ENCODE measurements at regions of chr11 and their contacts with region 1.

Region 1: GRCh38 chr11:88421530-88421929 is 84.0 kb upstream of the CTSC start:
- DNase-seq: peak; percentile 63
- H3K4me3 Mint-ChIP-seq: no peak overlapping the region
- H3K27ac Mint-ChIP-seq: no peak overlapping the region
- H3K4me1 Mint-ChIP-seq: peaks cover 39% of the 10 kb centered on the region
- H3K27me3 Mint-ChIP-seq: no peaks in the 10 kb centered on the region

Region 2: GRCh38 chr11:88174709-88175568 is 246.6 kb before region 1 on chr11 and contains the start of gene RAB38:
- CTCF ChIA-PET with region 1: no interaction called
- intact Hi-C with region 1: loop called (anchors 1 kb)
- DNase-seq: peak; percentile 75
- H3K4me3 Mint-ChIP-seq: peak within 1 kb of the TSS; percentile 72
- H3K27ac Mint-ChIP-seq: no peak within 1 kb of the TSS
- H3K4me1 Mint-ChIP-seq: peaks cover 31% of the 10 kb centered on the region
- H3K27me3 Mint-ChIP-seq: peaks cover 21% of the 10 kb centered on the region
- total RNA-seq, gene RAB38: 0.69 to 0.72 TPM

Region 3: GRCh38 chr11:88231894-88232482 is 189.5 kb before region 1 on chr11:
- CTCF ChIA-PET with region 1: no interaction called
- intact Hi-C with region 1: loop called (anchors 5 kb)
- DNase-seq: peak; percentile 34
- H3K4me3 Mint-ChIP-seq: no peak overlapping the region
- H3K27ac Mint-ChIP-seq: no peak overlapping the region
- H3K4me1 Mint-ChIP-seq: no peaks in the 10 kb centered on the region
- H3K27me3 Mint-ChIP-seq: peaks cover 4% of the 10 kb centered on the region

Region 4: DNA sequence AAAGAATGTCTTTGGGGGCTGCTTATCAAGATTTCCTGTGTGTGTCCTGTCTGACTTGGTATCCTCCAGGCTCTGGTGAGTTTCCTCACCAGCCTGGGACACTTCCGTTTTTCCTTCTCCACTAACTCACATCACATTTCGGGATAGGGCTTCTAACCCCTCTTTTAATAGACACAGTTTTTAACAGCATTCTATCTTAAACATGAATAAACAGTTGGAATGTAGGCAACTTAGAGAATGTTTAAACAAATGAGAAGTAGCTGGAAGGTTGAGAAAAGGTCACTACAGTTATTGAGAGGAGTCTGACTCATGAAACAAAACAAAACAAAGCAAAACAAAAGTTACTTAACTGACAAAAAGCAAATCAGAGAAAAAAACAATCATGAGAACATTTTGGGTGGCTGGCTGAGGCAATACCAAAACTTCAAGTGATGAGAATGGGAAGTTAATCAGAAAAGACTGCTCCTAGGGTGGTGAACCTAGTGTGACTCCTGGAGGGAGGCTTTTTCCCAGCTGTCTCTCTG is 19.3 kb before region 1 on chr11:
- CTCF ChIA-PET with region 1: no interaction called
- intact Hi-C with region 1: no loop called
- DNase-seq: no peak
- H3K4me3 Mint-ChIP-seq: no peak overlapping the region
- H3K27ac Mint-ChIP-seq: no peak overlapping the region
- H3K4me1 Mint-ChIP-seq: peaks cover 13% of the 10 kb centered on the region
- H3K27me3 Mint-ChIP-seq: no peaks in the 10 kb centered on the region

Measured in activated naive CD4-positive, alpha-beta T cell treated with anti-CD3 and anti-CD28 coated beads for 36 hours (primary cell).